ENCODE measurements at regions of chr11 and their contacts with region 1.

Region 1: DNA sequence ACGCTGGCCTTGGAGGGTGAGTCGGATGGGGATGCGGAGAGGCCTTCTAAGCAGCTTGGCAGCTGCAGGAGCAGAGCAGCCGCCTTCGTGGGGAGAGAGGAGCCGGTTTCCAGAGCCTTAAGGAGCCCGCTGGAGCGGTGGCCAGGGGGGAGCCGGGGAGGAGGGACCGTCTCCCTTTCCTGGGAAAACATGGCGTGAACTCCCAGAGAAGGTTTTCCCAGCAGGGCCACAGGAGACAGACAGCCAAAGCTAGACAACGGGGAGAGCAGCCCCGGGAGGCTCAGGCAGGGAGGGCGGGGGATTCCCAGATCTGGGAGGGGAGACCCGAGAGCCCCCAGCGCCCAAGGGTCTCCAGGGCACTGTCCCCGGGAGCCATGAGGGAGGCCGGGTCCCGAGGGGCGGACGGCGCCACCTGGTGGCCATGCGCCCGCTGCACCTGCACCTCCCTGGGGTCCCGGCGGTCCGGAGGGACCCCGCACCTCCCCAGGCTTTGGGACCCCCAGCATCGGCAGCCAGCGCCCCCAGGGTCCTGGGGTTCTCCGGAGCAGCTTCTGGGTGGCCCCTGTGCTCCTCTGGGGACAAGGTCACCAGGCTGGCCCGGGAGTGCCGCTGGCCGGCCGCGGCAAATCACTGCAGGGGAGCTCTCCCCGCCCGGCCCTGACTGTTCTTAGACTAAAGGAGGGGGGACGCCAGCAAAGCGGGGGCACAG is 2.4 kb upstream of the SYT8 start:
- H3K4me3 ChIP-seq: no peak overlapping the region
- H3K27ac ChIP-seq: no peak overlapping the region
- H3K4me1 ChIP-seq: no peaks in the 10 kb centered on the region
- CTCF ChIP-seq: peak; percentile 85

Region 2: DNA sequence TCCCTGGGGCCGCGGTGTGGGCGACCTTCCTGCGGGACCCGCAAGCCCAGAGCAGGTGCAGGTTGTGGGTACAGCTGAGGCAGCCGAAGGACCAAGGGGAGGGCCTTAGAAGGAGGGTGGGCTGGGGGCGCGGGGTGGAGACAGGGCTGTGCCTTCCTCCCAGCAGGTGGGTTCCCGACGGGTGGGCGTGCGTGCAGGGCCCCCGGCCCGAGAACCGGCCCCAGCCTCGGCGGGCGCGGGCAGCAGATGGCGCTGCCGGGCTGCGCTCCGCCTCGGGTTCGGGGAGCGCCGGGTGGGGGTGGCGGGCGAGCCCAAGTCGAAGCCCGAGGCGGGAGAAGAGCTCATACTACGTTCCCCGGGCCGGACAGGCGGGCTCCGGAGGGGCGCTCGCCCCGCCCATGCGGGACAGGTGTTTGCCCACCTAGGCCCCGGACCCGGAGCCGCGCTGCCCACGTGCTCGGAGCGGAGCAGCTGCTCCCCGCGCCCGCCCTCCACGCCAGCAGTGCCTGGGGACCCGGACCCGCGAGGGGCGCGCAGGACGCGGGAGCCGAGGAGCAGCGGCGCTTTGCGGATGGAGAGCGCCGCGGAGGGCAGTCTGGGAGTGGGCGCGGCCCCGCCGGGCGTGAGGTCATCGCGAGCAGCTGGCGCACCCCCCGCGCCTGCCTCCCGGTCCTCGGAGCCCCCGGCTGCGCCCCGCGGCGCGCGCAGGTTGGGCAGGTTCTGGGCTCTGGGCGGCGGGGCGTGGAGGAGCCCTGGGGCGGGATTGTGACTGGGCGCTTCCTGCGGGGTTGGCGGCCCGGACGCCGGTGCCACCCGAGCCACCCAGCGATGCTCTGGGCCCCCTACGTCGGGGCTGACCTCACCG is 285.6 kb before region 1 on chr11:
- CTCF ChIA-PET with region 1: interaction called, 14 read pairs
- POLR2A ChIA-PET with region 1: interaction called, 3 read pairs
- H3K4me3 ChIP-seq: peak overlapping the region; percentile 36
- H3K27ac ChIP-seq: no peak overlapping the region
- H3K4me1 ChIP-seq: peaks cover 3% of the 10 kb centered on the region; the same call in 1 of the 2 replicates
- CTCF ChIP-seq: peak; percentile 46; the same call in 1 of the 2 replicates

Region 3: GRCh38 chr11:1694064-1694845 is 138.1 kb before region 1 on chr11:
- CTCF ChIA-PET with region 1: interaction called, 261 read pairs
- POLR2A ChIA-PET with region 1: interaction called, 16 read pairs
- H3K4me3 ChIP-seq: no peak overlapping the region
- H3K27ac ChIP-seq: no peak overlapping the region
- H3K4me1 ChIP-seq: no peaks in the 10 kb centered on the region
- CTCF ChIP-seq: peak; percentile 91

Region 4: GRCh38 chr11:1706634-1707400 is 125.5 kb before region 1 on chr11:
- CTCF ChIA-PET with region 1: interaction called, 38 read pairs
- POLR2A ChIA-PET with region 1: no interaction called
- H3K4me3 ChIP-seq: no peak overlapping the region
- H3K27ac ChIP-seq: no peak overlapping the region
- H3K4me1 ChIP-seq: no peaks in the 10 kb centered on the region
- CTCF ChIP-seq: no peak

Region 5: DNA sequence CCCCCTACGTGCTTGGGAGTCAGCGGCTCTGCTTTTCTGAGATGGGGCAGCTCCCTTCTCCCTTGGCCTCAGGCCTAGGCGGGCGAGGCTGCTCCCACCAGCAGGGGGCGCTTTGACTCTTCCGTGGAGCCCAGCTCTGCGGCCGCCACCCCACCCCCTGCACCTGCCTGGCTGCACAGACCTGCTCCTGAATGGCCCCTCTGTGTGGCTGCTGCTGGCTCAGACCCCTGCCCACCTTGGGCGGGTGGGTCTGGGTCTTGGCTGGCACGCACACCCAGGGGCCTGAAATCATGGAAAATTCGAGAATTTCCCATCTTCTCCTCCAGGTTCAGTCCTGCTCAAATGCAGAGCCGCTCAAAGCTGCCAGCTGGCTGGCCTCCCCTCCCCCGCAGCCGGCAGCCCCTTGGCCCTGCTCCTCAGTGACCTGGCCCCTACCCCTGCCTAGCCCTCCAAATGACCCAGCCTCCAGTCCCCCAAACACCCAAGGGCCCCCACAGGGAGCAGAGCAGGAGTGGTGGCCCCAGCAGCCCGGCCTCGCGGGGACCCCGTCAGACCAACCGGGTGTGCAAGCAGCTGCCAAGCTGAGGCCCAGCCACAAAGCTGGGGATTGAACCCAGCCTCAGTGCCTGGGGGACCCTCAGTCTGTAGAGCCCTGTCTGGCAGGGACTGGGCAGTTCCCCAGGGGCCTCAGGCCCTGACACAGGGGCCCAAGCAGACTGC is 50.3 kb after region 1 on chr11:
- CTCF ChIA-PET with region 1: interaction called, 13 read pairs
- POLR2A ChIA-PET with region 1: no interaction called
- H3K4me3 ChIP-seq: no peak overlapping the region
- H3K27ac ChIP-seq: no peak overlapping the region
- H3K4me1 ChIP-seq: no peaks in the 10 kb centered on the region
- CTCF ChIP-seq: peak; percentile 82

Measured in HEK293 (cell line).